ENCODE measurements at regions of chr5 and their contacts with region 1.

Region 1: DNA sequence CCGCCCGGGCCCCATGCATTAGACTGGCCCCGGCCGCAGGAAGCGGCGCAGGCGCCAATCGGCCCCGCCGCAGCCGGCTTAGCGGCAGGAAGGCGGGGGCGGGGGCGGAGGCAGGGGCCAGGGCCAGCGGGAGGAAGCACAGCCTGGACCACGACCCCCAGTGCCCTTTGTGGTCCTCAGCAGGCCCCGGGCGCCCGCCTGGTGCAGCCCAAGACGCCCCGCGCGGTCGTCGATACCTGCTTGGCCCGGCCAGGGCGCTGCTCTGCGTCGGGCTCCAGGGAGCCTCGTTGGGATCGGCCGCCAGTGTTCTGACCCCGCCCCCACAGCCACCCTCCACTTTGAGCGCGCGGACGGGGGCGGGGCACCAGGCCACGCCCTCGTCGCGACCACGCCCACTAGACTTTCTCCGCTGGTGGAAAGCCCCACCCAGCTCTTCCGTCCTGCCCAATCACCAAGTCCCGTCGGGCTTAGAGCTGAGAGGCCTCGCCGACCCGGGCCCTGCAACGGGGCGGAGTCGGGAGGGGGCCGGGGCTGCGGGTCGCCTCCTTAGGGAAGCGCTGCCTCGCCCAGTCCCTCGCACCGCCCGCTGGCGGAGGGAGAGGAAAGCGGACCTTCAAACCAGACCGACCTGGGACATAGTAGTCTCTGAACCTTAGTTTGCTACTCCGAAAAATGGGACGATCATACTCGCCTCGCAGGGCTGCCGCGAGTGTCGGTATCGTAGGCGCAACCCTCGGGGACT is at the start of gene PDLIM7:
- DNase-seq: peak; percentile 97
- CTCF ChIP-seq: no peak

Region 2: DNA sequence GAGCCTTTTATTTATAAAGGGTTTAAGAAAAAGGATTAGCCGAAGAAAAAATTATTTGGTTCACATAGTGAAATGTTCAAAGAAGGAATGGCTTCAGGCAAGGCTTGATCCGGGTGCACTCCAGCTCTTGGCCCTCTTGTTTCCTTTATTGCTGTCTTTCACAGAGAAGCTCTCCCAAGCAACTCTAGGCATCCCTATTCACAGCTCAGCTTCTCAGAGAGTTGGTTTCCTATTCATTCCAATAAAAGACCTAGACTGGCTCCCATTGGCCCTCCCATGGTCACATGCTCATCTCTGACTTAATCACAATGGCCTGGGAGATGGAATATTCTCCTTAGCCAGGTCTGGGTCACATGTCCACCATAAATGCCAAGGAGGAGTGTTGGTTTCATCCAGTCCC is 420.1 kb before region 1 on chr5:
- CTCF ChIA-PET with region 1: no interaction called
- POLR2A ChIA-PET with region 1: no interaction called
- DNase-seq: no peak
- CTCF ChIP-seq: no peak

Region 3: GRCh38 chr5:177412603-177413233 is 84.7 kb before region 1 on chr5:
- CTCF ChIA-PET with region 1: interaction called, 11 read pairs
- POLR2A ChIA-PET with region 1: no interaction called
- DNase-seq: no peak
- CTCF ChIP-seq: no peak

Region 4: DNA sequence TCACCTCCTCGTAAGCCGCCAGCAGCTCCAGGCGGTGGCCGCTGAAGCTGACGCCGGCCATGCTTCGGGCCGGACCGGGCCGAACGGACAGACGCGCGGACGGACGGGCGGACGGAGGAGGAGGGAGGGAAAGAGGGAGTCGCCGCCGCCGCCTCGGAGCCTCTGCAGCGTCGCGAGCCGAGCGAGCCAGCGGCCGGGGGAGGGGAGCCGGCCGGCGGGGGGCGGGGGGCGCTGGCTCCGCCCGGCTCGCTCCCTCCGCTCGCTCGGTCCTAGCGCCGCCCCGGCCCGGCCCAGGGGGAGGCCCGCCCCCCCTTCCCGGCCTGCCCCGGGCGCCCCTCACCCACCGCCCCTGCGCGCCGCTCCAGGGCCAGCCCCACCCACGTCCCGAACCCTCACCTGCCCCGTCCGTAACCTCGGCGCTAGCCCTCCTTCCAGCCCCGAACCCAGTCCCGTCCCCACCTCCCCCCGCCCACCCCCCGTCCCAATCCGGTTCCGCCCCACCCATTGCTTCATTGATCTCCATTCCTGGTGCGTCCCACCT is 23.9 kb before region 1 on chr5 and contains the start of gene DBN1:
- CTCF ChIA-PET with region 1: interaction called, 24 read pairs
- POLR2A ChIA-PET with region 1: no interaction called
- DNase-seq: peak; percentile 87
- CTCF ChIP-seq: no peak

Region 5: GRCh38 chr5:177478711-177479646 is 18.5 kb before region 1 on chr5:
- CTCF ChIA-PET with region 1: interaction called, 24 read pairs
- POLR2A ChIA-PET with region 1: interaction called, 5 read pairs
- DNase-seq: peak; percentile 35
- CTCF ChIP-seq: no peak

Region 6: DNA sequence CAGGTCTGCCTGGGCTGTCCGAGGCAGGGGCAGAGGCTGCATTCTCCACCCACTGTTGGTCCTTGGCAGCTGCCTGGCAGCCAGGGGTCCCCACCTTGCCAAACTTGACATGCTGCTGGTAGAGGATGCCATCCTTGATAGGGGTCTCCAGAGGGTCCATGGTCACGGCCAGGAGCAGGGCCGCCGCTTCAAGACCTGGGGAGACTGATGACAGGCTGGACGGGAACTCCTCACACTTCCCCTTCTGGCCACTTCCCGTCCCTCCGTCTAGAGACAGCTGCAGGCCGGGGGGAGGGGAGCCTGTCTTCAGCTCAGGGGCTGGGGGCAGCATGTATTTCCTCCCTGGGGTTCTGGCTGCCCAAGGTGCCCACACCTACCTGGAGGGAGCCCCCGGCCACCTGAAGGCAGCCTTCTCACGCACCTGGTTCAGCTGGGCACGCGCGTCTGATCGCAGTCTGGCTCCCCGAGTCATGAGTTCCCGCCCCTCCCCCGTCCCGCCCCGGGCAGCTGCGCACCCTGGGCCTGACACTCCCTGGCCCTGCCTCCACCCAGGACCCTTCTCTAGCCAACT is 12.0 kb after region 1 on chr5 and contains the start of gene DOK3:
- CTCF ChIA-PET with region 1: interaction called, 67 read pairs
- POLR2A ChIA-PET with region 1: interaction called, 17 read pairs
- DNase-seq: peak; percentile 66
- CTCF ChIP-seq: no peak

Region 7: GRCh38 chr5:177516604-177517568 is 19.4 kb after region 1 on chr5 and contains the start of gene DDX41:
- CTCF ChIA-PET with region 1: interaction called, 67 read pairs
- POLR2A ChIA-PET with region 1: interaction called, 4 read pairs
- DNase-seq: peak; percentile 99
- CTCF ChIP-seq: no peak

Measured in GM10248 (cell line).